ENCODE measurements at regions of chr16 and their contacts with region 1.

Region 1: DNA sequence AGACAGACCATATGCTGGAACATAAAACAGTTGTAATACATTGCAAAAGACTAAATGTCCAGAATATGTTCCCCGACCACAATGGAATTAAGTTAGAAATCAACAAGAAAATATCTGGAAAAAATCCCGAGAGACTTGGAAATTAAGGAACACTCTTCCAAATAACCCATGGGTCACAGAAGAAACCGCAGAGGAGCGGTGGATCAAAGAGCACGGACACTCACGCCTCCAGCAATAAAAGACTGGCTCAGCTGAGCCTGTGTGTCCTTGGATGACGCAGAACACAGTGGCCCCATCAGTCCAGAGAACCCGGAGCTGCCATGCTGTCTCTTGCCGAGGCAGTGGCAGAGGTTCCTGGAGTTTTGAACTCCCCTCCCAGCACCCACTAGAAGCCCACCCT is 30.9 kb upstream of the FOXF1 start:
- DNase-seq: no peak
- H3K4me3 ChIP-seq: no peak overlapping the region
- H3K27ac ChIP-seq: no peak overlapping the region
- H3K4me1 ChIP-seq: no peaks in the 10 kb centered on the region
- H3K27me3 ChIP-seq: peaks cover 91% of the 10 kb centered on the region
- CTCF ChIP-seq: no peak

Region 2: GRCh38 chr16:86383488-86384262 is 95.7 kb before region 1 on chr16:
- CTCF ChIA-PET with region 1: no interaction called
- POLR2A ChIA-PET with region 1: no interaction called
- intact Hi-C with region 1: no loop called
- DNase-seq: peak in 1 of 2 experiments; percentile 47
- H3K4me3 ChIP-seq: no peak overlapping the region
- H3K27ac ChIP-seq: no peak overlapping the region
- H3K4me1 ChIP-seq: no peaks in the 10 kb centered on the region
- H3K27me3 ChIP-seq: peaks cover 95% of the 10 kb centered on the region
- CTCF ChIP-seq: no peak

Region 3: DNA sequence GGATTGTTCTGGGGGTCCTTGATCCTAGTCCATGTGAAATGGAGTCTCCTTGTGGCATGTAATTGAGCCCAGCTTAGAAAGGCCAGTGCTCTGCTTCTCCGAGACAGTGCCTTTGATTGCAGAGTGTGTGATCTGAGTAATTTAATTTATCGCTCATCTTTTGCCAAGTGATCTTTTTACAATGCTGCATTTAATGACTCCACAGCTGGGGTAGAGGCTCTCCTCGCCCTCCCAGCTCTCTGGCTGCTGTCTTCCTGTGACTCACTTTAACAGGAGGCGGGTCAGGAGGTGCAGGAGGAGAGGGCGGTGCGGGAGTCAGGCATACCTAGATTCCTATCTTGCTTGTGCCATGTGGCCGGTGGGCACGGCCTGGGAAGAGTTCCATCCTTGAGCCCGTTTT is 82.5 kb before region 1 on chr16:
- CTCF ChIA-PET with region 1: no interaction called
- POLR2A ChIA-PET with region 1: interaction called, 10 read pairs
- intact Hi-C with region 1: no loop called
- DNase-seq: no peak
- H3K4me3 ChIP-seq: no peak overlapping the region
- H3K27ac ChIP-seq: no peak overlapping the region
- H3K4me1 ChIP-seq: no peaks in the 10 kb centered on the region
- H3K27me3 ChIP-seq: peaks cover 53% of the 10 kb centered on the region
- CTCF ChIP-seq: no peak